HEK293T (cell line): ENCODE measurements at regions of chr1 and their contacts with region 1.

Region 1: DNA sequence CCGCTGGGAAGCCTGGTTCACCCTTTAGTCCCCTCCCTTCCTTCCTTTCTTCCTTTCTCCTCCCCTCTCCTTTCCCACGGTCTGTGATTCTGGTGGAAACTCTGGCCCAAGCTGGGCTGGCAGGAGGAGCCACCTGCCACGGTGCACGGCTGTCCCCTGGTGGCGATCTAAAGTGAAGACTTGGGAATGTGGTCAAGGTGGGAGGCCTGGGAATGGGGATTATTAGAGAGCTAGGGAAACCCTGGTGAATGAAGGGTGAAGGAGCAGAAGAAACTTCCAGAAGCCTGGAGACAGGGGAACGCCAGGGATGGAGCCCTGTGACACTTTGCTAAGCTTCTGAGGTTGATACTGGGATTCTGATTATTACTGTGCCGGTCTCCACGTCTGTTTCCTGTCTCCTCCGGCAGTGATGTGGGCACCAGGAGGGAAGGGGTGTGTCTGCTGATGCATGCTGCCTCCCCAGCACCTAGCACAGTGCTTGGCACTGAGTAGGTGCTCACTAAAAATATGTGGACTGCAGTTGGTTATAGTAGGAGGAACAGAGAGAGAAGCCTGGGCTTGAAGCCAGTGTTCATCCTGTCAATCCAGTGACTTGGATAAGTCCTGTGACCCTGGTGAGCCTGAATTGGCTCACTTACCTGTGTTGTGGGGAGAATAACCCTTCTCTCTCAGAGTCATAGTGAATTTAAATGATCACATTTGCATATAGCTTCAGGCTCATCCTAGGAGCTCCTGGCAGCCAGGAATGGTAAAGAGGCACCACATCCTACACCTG is 71.2 kb upstream of the NBPF3 start:
- DNase-seq: peak; percentile 83

Region 2: GRCh38 chr1:21216835-21217811 is 151.6 kb before region 1 on chr1:
- CTCF ChIA-PET with region 1: interaction called, 14 read pairs
- POLR2A ChIA-PET with region 1: no interaction called
- DNase-seq: peak; percentile 68

Region 3: DNA sequence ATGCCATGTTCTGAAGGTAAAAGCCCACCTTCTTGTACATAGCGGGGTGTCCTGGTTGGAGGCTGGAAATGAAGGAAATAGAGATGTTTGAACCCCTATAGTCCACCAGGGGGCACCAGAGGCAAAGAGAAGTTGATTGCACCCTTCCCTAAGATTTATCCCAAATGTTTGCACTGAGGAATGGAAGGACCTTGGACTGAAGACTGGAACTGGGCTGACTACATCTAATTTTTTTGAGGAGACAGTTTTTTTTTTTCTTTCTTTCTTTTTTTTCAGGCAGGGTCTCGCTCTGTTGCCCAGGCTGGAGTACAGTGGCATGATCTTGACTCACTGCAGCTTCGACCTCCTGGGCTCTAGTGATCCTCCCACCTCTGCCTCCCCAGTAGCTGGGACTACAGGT is 136.7 kb before region 1 on chr1:
- CTCF ChIA-PET with region 1: interaction called, 38 read pairs
- POLR2A ChIA-PET with region 1: no interaction called
- DNase-seq: peak; percentile 76

Region 4: GRCh38 chr1:21255278-21255942 is 113.3 kb before region 1 on chr1:
- CTCF ChIA-PET with region 1: interaction called, 59 read pairs
- POLR2A ChIA-PET with region 1: no interaction called
- DNase-seq: peak; percentile 82

Region 5: DNA sequence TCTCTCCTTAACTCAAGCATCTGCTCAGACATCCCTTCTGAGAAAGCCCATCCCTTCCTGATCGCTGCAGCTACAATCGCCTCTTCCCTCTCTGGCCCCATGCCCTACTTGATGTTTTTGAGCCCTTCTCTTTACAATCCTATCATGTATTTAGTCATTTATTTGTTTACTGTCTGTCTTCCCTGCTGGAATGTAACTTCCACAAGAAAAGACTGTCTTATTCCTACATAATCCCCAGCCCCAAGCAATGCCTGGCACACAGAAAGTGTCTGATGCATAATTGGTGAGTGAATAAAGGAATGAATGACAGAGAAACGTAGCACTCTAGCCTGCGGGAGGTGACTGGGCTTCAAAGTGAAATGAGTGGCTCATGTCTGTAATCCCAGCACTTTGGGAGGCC is 103.8 kb before region 1 on chr1:
- CTCF ChIA-PET with region 1: interaction called, 10 read pairs
- POLR2A ChIA-PET with region 1: no interaction called
- DNase-seq: no peak